Activated CD4-positive, alpha-beta T cell treated with anti-CD3 and anti-CD28 coated beads, Interleukin-2, amount 10 ng/mL, durations not matched to agents 24 days and 14 days (primary cell): ENCODE measurements at regions of chr16 and their contacts with region 1.

Region 1: DNA sequence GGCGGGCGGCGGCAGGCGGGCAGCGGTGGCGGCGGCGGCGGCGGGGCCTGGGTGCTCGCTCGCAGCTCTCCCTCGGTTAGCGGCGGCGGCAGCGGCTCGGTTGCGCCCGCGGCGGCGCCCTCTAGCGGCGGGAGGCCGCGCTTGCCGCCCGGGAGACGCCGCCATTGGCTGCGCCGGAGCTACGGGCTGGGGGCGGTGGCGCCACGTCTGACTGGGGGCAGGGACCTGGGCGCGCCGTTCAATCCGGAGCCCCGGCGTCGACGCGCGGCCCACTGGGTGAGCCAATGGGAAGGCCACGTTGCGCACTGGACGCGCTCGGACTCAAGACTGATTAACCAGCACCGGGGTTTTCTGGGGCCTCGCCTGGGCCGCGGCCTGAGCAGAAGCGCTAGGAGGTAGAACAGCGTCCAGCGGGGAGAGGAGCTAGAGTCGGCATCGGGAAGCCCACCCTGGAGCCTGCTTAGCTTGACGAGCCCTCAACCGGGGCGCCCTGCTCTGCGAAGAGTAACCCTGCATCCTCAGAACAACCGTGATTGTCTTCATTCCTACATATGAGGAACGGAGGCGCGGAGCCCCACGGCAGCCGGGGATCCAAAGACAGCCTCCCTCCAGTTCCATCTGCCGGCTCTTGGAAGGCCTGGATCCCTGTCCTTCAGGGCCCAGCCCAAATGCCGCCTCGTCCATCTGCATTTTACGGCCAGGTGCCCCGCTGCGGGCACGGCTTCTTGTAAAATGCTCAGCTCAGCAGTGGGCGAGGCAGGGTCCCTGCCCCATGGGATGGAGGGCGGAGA is at the start of gene ZC3H7A:
- DNase-seq: peak; percentile 98
- H3K4me3 Mint-ChIP-seq: peak within 1 kb of the TSS; percentile 93
- H3K27ac Mint-ChIP-seq: peak within 1 kb of the TSS; percentile 95
- H3K4me1 Mint-ChIP-seq: peaks cover 69% of the 10 kb centered on the region
- H3K27me3 Mint-ChIP-seq: no peaks in the 10 kb centered on the region
- total RNA-seq, gene ZC3H7A: 58.3 and 64.1 TPM in 2 replicates

Region 2: GRCh38 chr16:11783319-11784037 is 13.9 kb before region 1 on chr16:
- intact Hi-C with region 1: loop called (anchors 1 kb)
- DNase-seq: peak; percentile 89
- H3K4me3 Mint-ChIP-seq: peak overlapping the region; percentile 82
- H3K27ac Mint-ChIP-seq: peak overlapping the region; percentile 97
- H3K4me1 Mint-ChIP-seq: peaks cover 61% of the 10 kb centered on the region
- H3K27me3 Mint-ChIP-seq: no peaks in the 10 kb centered on the region